K562 (cell line): ENCODE measurements at regions of chr9 and their contacts with region 1.

Region 1: DNA sequence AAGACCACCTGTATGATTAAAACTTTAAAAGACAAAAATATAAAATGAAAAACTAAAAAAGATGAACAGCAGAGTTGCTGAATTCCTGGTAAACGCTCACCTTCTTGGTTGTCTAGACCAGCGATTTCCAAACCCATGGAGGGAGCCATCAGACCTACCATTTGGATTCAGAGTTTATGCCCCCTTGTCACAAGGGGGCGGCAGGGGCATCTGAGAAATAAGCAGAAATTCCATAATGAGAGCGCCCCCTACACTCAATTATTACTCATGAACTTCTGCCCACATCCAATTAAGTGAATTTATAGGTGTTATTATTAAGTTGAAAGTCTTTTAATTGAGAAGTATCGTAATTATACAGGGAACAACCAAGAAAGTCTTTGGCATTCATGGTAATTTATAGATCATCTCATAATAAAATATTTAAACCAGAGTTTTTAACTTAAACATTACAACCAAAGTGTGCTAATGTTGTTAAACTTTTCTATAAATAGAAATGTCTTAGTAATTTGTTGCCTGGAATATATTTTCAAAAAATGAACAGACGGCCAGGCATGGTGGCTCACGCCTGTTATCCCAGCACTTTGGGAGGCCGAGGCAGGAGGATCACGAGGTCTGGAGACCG is 35.2 kb upstream of the SPATA31C2 start:
- DNase-seq: peak; percentile 36 to 76 (median 42)
- ATAC-seq: peak; percentile 84
- H3K4me3 ChIP-seq: no peak overlapping the region
- H3K27ac ChIP-seq: no peak overlapping the region
- H3K4me1 ChIP-seq: no peaks in the 10 kb centered on the region
- H3K27me3 ChIP-seq: no peaks in the 10 kb centered on the region; a peak in 1 of 5 replicates
- CTCF ChIP-seq: peak; percentile 81 to 100 (median 99)
- EP300 ChIP-seq: no peak
- POLR2A ChIP-seq: no peak
- RAD21 ChIP-seq: peak; percentile 59 to 75

Region 2: DNA sequence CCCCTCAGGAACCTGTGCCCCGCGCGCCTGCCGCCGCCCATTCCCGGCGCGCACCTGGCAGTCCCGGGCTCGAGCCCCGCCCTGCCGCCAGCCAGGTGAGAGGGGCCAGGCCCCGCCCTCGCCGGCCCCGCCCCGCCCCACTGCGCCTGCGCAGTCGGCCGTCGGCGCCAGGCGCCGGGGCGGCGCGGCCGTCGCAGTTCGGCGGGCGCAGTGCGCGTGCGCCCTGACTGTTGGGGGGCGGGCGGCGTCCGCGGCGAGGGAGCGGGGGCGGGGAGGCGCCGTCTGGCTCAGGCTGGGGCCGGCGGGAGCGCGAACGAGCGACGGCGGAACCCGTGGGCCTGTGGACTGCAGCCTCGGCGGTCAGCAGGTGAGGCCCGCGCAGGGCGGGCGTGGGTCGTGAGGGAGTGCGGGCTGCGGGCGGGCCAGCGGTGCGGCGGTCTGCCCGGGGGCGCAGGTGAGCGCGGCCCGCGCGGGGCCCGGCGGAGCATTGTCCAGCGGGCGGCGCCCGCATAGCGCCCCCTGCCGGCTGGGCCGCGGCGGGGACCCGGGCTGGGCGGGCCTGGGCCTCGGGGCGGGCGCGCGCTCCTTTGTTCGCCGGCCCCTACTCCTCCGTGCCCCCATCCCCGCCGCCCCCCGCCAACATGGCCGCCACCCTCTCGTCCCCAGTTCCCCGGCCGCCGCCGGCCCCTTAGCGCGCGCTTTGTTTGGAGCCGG is 214.8 kb after region 1 on chr9 and contains the start of gene SPIN1:
- CTCF ChIA-PET with region 1: interaction called, 4 read pairs
- POLR2A ChIA-PET with region 1: no interaction called
- in situ Hi-C with region 1: no loop called
- intact Hi-C with region 1: loop called (anchors 10 kb)
- DNase-seq: peak; percentile 77 to 91 (median 90)
- ATAC-seq: peak; percentile 93
- H3K4me3 ChIP-seq: peak within 1 kb of the TSS; percentile 59
- H3K27ac ChIP-seq: peak within 1 kb of the TSS; percentile 80
- H3K4me1 ChIP-seq: peaks cover 3 to 7% of the 10 kb centered on the region in 2 experiments; a peak in 4 of 5 replicates
- H3K27me3 ChIP-seq: no peaks in the 10 kb centered on the region
- CTCF ChIP-seq: peak in 2 of 3 experiments; percentile 47 to 61; a peak in 3 of 6 replicates
- EP300 ChIP-seq: no peak
- POLR2A ChIP-seq: no peak
- RAD21 ChIP-seq: peak in 1 of 2 experiments; percentile 40; a peak in 2 of 4 replicates
- polyA plus RNA-seq, gene SPIN1: 7.4 to 7.7 TPM

Region 3: DNA sequence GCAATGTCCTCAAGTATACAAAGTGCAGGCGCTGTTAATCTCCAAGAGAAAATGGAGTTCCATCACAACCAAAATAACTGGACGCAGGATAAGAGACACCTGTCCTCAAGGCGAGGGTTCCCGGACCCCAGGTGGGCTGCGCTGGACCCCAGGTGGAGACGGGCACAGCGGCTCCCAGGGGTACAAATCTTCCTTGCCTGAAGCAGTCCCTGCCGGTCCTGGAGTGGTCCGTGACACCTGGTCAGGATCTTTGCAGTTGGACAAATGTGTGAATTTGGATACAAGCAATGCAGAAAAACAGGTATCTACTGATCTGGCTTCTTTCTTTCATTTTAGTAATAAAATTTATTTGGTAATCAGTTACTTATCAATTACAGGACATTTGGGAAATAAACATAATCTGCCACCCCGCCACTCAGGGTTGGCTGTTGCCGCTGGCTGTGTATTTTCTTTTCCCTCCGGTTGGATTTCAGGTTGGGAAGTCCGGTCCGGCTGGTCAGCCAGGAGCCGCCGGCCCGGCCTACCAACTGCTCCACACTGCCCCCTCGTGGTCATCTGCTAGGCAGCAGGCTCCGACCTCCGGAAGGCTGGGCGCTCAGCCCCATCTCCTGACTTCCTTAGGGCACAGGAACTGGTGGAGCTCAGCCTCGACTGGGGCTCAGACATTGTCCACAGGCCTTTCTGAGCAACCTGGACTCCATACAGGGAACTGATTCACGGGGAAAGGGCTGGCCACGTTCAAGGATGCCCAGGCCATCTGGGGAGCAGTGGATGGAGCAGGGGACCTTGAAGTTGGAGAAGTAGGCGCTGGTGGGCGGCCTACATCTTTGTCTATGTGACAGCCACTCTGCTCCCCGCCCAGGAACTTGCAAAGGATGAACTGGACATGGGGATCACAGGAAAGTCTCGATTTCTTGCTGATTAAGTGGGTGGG is 404.9 kb after region 1 on chr9:
- CTCF ChIA-PET with region 1: interaction called, 6 read pairs
- POLR2A ChIA-PET with region 1: no interaction called
- in situ Hi-C with region 1: no loop called
- intact Hi-C with region 1: loop called (anchors 5 kb)
- DNase-seq: peak; percentile 67 to 79 (median 76)
- ATAC-seq: peak; percentile 94
- H3K4me3 ChIP-seq: no peak overlapping the region
- H3K27ac ChIP-seq: no peak overlapping the region
- H3K4me1 ChIP-seq: peaks cover 0 to 7% of the 10 kb centered on the region in 2 experiments; a peak in 1 of 5 replicates
- H3K27me3 ChIP-seq: peaks cover 0 to 23% of the 10 kb centered on the region in 2 experiments; a peak in 4 of 5 replicates
- CTCF ChIP-seq: peak; percentile 70 to 95 (median 86)
- EP300 ChIP-seq: no peak
- POLR2A ChIP-seq: no peak
- RAD21 ChIP-seq: peak; percentile 72 to 82